ENCODE measurements at regions of chrX and their contacts with region 1.

Region 1: GRCh38 chrX:108070891-108071290 is 20.5 kb downstream of the PSMD10 start:
- DNase-seq: no peak
- H3K4me3 Mint-ChIP-seq: no peak overlapping the region
- H3K27ac Mint-ChIP-seq: no peak overlapping the region
- H3K4me1 Mint-ChIP-seq: no peaks in the 10 kb centered on the region
- H3K27me3 Mint-ChIP-seq: peaks cover 6% of the 10 kb centered on the region

Region 2: DNA sequence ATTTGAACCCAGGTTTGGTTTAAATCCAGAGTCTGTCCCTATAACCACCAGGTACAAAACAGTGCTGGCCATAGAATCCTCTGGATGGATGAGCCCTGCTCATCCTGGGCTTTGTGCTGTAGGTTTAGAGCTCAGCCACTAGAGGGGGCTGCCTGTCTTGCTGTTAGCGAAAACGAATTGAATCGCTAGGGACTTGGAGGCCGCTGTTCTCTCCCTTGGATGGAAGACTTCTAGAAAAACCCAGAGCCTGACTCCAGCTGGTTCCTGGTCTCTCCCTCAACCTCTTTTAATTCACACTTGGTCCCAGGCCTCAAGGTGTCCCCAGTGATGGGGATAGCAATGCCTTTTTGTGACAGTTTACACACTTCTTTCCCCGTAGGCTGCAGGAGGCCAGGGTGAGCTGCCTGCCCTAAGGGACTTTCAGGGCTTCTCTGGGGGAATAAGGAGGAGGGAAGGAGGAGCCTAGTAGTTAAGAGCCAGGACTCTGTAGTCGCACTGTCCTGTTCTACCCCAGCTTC is 1176.4 kb before region 1 on chrX:
- intact Hi-C with region 1: loop called (anchors 2 kb)
- DNase-seq: peak; percentile 18
- H3K4me3 Mint-ChIP-seq: no peak overlapping the region
- H3K27ac Mint-ChIP-seq: no peak overlapping the region
- H3K4me1 Mint-ChIP-seq: no peaks in the 10 kb centered on the region
- H3K27me3 Mint-ChIP-seq: no peaks in the 10 kb centered on the region

Region 3: DNA sequence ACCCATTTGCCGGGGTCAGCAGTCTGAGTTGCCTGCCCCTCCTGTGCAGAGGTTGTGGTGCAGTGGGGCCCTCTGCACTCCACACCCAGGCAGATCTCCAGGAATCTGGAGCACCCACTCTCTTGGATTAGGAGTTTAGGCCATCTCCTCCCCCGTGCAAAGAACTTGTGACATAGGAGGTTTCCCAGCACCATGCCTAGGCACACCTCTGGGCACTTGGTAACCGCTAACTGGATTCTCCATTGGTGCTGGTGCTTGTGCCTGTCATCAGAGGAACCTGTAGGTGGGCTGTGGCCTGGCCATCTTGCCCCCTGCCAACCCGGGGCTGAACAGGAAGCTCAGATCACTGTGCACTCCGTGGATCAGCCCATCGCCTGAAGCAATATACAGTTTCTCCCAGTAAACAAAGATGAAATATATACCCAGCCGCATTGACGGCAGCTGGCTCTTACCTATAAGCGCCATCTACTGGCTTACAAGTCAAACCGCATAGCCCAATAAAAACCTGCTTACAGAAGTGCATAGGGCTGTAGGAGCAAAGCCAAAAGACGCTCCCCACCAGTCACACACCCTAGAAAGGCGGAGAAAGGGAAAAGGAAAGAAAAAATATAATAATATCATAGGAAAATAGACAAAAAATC is 69.6 kb before region 1 on chrX:
- intact Hi-C with region 1: loop called (anchors 1 kb)
- DNase-seq: no peak
- H3K4me3 Mint-ChIP-seq: no peak overlapping the region
- H3K27ac Mint-ChIP-seq: no peak overlapping the region
- H3K4me1 Mint-ChIP-seq: no peaks in the 10 kb centered on the region
- H3K27me3 Mint-ChIP-seq: peaks cover 4% of the 10 kb centered on the region

Region 4: GRCh38 chrX:108020631-108021030 is 50.3 kb before region 1 on chrX:
- intact Hi-C with region 1: loop called (anchors 1 kb)
- DNase-seq: no peak
- H3K4me3 Mint-ChIP-seq: no peak overlapping the region
- H3K27ac Mint-ChIP-seq: peak overlapping the region; percentile 12
- H3K4me1 Mint-ChIP-seq: peaks cover 34% of the 10 kb centered on the region
- H3K27me3 Mint-ChIP-seq: no peaks in the 10 kb centered on the region

Measured in activated T-helper 1 cell treated with anti-CD3 and anti-CD28 coated beads, Interleukin-12 subunit alpha, Interleukin-12 subunit beta, Interleukin-2, Interleukin-4 antibody, amounts not matched to agents 30 ng/mL and 10 ng/mL and 1 ng/mL, durations not matched to agents 14 hours and 24 hours and 36 hours (primary cell).